ENCODE measurements at regions of chr1 and their contacts with region 1.

Region 1: GRCh38 chr1:204565617-204566582 is 49.7 kb downstream of the MDM4 start:
- DNase-seq: peak; percentile 40
- ATAC-seq: peak; percentile 85
- H3K4me3 Mint-ChIP-seq: peak overlapping the region; percentile 53
- H3K27ac Mint-ChIP-seq: peak overlapping the region; percentile 71
- H3K4me1 Mint-ChIP-seq: peaks cover 54% of the 10 kb centered on the region
- H3K27me3 Mint-ChIP-seq: peaks cover 6% of the 10 kb centered on the region
- CTCF ChIP-seq: peak; percentile 68

Region 2: DNA sequence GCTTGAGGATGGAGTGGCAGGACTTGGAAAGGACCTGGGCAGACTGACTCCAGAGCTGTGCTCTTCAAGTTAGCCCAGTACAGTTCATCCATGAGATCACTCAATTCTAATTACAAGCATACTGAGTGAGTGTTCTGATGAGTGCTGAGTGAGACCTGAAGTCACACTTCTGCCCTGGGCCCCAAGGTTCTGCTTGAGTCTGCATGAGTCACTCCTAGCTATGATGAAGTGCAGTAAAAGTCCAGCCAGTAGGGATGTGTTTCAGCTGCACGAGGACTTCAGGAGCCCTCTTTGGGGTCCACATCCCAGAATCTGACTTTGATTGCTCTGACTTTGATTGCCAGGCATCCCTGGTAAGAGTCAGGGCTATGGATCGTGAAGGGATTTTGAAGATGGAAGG is 242.0 kb before region 1 on chr1:
- CTCF ChIA-PET with region 1: no interaction called
- POLR2A ChIA-PET with region 1: no interaction called
- DNase-seq: no peak
- ATAC-seq: no peak
- H3K4me3 Mint-ChIP-seq: no peak overlapping the region
- H3K27ac Mint-ChIP-seq: no peak overlapping the region
- H3K4me1 Mint-ChIP-seq: peaks cover 24% of the 10 kb centered on the region
- H3K27me3 Mint-ChIP-seq: no peaks in the 10 kb centered on the region
- CTCF ChIP-seq: no peak

Region 3: GRCh38 chr1:204578867-204579664 is 13.2 kb after region 1 on chr1:
- CTCF ChIA-PET with region 1: interaction called, 32 read pairs
- POLR2A ChIA-PET with region 1: interaction called, 3 read pairs
- DNase-seq: peak; percentile 39
- ATAC-seq: peak; percentile 34
- H3K4me3 Mint-ChIP-seq: no peak overlapping the region
- H3K27ac Mint-ChIP-seq: no peak overlapping the region
- H3K4me1 Mint-ChIP-seq: peaks cover 60% of the 10 kb centered on the region
- H3K27me3 Mint-ChIP-seq: peaks cover 27% of the 10 kb centered on the region
- CTCF ChIP-seq: no peak

Region 4: DNA sequence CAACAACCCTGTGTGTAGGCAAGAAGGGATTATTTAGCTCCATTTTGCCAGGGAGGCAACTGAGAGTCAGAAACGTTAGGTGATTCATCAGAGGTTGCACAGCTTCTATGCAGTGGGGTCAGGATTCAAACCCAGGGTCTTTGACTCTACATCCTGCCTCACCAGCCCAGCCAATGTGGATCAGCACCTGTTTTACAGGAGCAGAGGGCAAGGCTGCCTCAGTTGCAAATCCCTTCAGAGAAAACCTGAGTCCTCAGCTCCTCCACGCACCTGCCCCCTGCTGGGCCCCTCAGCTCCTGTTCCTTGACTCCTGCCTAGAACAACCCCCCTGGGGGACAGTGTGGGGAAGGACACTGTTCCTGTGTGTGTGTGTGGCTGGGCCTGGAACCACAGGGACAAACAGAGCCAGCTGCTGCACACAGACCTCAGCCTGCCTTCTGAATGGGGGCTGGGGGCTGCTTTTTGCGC is 58.0 kb after region 1 on chr1:
- CTCF ChIA-PET with region 1: interaction called, 27 read pairs
- POLR2A ChIA-PET with region 1: no interaction called
- DNase-seq: peak; percentile 63
- ATAC-seq: peak; percentile 65
- H3K4me3 Mint-ChIP-seq: no peak overlapping the region
- H3K27ac Mint-ChIP-seq: no peak overlapping the region
- H3K4me1 Mint-ChIP-seq: peaks cover 29% of the 10 kb centered on the region
- H3K27me3 Mint-ChIP-seq: no peaks in the 10 kb centered on the region; the same call in 1 of the 2 replicates
- CTCF ChIP-seq: no peak

Region 5: DNA sequence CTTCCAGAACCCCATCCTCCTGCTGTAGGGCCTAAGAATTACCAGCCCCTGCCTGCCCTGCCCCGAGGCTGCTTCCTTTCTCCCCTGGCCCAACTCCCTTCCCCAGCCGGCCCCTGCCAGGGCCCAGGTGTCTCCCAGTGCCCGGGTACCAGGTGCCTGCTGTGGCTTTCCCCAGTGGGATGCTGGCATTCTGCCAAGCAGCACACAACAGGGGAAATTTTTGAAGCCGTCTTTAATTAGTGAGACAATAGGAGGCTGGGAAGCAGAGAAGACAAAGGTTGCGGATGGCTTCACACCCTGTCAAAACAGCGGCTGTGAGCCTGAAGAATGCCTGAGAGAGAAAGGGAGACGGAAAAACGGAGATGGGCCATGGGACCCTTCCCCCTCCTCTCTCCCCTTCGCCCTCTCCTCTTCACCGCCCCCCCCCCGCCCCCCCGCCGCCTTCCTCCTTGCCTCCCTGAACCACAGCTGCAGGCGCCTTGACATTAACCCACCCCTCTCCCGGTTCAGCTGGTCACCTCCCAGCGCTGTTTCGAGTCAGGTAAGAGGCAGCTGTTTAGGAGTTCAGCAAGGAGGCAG is 86.0 kb after region 1 on chr1:
- CTCF ChIA-PET with region 1: interaction called, 23 read pairs
- POLR2A ChIA-PET with region 1: interaction called, 4 read pairs
- DNase-seq: peak; percentile 50
- ATAC-seq: peak; percentile 72
- H3K4me3 Mint-ChIP-seq: peak overlapping the region; percentile 43
- H3K27ac Mint-ChIP-seq: no peak overlapping the region
- H3K4me1 Mint-ChIP-seq: peaks cover 43% of the 10 kb centered on the region
- H3K27me3 Mint-ChIP-seq: peaks cover 18% of the 10 kb centered on the region
- CTCF ChIP-seq: no peak

Region 6: DNA sequence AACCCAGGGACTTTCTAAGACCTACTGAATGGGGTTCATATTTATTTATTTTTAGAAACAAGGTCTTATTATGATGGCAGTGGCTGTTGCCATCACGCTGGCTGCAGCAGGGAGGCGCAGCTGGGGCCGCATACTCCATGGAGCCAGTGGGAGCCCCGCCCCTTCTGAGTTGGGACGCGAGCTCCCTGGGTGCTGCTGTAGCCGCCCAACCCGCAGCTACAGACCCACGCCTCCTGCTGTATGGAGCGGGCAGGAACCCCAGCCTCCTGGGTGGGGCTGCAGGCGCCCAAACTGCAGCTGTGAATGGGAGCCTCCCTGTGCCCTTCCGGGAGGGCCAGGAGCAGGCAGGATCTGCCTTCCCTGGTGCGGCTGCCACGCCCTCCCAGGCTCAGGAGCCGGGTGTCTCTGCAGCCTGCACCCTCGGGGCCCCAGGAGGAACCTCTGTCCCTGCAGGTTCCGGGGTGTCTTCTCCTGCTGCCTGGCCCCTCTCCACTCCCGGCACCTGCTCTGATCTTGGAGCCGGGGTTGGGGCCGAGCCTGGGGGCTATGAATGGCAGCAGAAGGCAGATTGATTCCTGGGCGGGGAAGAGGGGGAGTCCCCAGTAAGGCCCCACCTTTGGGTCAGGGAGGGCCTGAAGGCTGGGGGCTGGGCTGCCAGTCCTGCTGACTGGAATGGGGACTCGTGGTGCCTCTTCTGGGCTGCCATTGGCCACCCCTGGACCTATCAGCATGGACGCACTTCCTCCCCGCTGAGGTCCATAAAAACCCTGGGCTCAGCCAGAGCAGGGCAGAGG is 186.2 kb after region 1 on chr1:
- CTCF ChIA-PET with region 1: interaction called, 18 read pairs
- POLR2A ChIA-PET with region 1: interaction called, 3 read pairs
- DNase-seq: peak; percentile 73
- ATAC-seq: peak; percentile 85
- H3K4me3 Mint-ChIP-seq: 0 out of 2 replicates have a peak overlapping the region, but pooled peaks have one; percentile 25
- H3K27ac Mint-ChIP-seq: no peak overlapping the region
- H3K4me1 Mint-ChIP-seq: peaks cover 24% of the 10 kb centered on the region
- H3K27me3 Mint-ChIP-seq: peaks cover 12% of the 10 kb centered on the region
- CTCF ChIP-seq: no peak

Region 7: GRCh38 chr1:204819495-204819894 is 253.6 kb after region 1 on chr1:
- CTCF ChIA-PET with region 1: interaction called, 10 read pairs
- POLR2A ChIA-PET with region 1: no interaction called
- DNase-seq: no peak
- ATAC-seq: no peak
- H3K4me3 Mint-ChIP-seq: no peak overlapping the region
- H3K27ac Mint-ChIP-seq: no peak overlapping the region
- H3K4me1 Mint-ChIP-seq: no peaks in the 10 kb centered on the region
- H3K27me3 Mint-ChIP-seq: peaks cover 5% of the 10 kb centered on the region; the same call in 1 of the 2 replicates
- CTCF ChIP-seq: no peak